Stomach (tissue), 19 donors: ENCODE measurements at regions of chr9 and their contacts with region 1.

Region 1: DNA sequence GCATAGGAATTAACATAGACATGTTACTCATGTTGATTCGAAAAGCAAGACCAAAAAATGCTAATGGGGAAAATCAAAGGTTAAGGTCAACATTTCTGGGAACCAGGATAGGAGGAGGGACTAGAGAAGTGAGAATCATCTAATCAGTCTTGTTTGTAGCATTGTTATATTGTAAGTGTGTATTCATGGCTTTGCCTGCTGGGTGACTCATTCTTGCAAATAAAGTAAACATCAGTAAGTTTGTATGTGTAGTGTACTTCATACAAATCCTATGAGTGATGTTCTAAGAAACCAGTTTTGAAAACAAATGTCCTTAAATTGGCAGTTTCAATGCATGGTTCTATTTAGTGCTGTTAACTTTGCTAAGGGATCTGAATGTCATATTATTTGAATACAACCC is 79.0 kb upstream of the TMEM252 start:
- DNase-seq: no peak
- H3K4me3 ChIP-seq: no peak overlapping the region
- H3K27ac ChIP-seq: no peak overlapping the region
- H3K4me1 ChIP-seq: no peaks in the 10 kb centered on the region
- H3K27me3 ChIP-seq: no peaks in the 10 kb centered on the region
- CTCF ChIP-seq: no peak
- EP300 ChIP-seq: no peak
- POLR2A ChIP-seq: no peak

Region 2: DNA sequence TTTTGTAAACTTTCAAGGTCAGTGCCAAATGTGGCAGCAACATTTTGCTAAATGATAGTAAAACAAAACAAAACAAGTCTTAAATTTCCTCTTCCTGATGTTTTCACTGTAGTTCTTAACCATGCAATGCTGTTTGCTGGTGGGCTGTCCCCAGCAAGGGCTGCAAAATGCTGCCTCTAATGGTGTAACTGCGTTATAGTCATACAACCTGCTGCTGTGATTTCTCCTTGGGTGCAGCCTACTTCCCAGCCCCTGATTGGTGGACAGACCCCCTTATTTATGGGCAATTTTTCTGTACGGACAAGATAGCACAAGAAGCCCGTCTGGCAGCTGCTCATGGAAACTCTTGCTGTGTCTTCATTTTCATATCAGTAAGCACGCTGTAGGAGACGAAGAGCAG is 58.8 kb after region 1 on chr9:
- intact Hi-C with region 1: loop called (anchors 10 kb)
- DNase-seq: peak in 1 of 2 donors; percentile 56
- H3K4me3 ChIP-seq: no peak overlapping the region
- H3K27ac ChIP-seq: no peak overlapping the region
- H3K4me1 ChIP-seq: peaks cover 0 to under 1% (median 0%) of the 10 kb centered on the region in 4 donors
- H3K27me3 ChIP-seq: peaks cover 0 to 25% (median 0%) of the 10 kb centered on the region in 3 donors
- CTCF ChIP-seq: no peak
- EP300 ChIP-seq: no peak
- POLR2A ChIP-seq: no peak